ENCODE measurements at regions of chr20 and their contacts with region 1.

Region 1: DNA sequence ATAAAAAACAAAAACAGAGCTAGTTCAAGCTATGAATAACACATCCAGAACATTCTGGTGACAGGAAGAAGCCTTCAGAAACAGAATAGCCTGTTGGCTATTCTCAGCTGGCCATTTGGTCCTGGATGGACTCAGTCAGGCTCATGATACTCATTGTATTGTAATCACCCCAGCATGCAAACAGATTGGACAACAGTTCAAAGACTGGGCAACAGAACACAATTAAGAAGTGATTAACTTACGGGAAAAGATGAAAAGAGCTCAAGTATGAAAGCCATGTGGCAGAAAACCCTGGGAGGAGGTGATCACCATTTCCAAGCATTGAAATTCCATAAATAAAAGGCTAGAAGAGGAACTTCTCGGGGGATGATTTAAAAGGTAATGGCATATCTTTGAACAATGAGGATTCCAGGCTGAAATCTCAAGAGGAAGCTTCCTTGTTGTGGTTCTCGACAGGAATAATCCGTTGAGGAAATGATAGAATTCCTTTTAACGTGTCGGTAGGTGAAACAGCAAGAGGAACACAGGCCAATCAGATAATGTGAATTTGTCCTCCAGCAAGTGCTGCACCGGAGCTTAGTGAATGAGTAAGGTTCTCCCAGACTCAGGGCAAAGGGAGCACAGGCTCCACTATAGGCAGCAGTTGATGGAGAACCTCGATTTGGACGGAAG is 172.4 kb downstream of the BCAS1 start:
- DNase-seq: peak in 1 of 2 donors; percentile 41
- ATAC-seq: peak; percentile 36 to 68 (median 60)
- H3K4me3 ChIP-seq: no peak overlapping the region
- H3K27ac ChIP-seq: peak overlapping the region in 8 of 10 donors; percentile 30 to 85 (median 76)
- H3K4me1 ChIP-seq: peaks cover 0 to 49% (median 37%) of the 10 kb centered on the region in 9 donors
- H3K27me3 ChIP-seq: no peaks in the 10 kb centered on the region
- CTCF ChIP-seq: no peak

Region 2: GRCh38 chr20:53828682-53829254 is 69.3 kb before region 1 on chr20:
- intact Hi-C with region 1: loop called in 1 of 10 experiments (anchors 1 kb)
- DNase-seq: peak in 1 of 2 donors; percentile 63
- ATAC-seq: peak; percentile 72 to 93 (median 85)
- H3K4me3 ChIP-seq: peak overlapping the region in 7 of 10 donors; percentile 5 to 43 (median 35)
- H3K27ac ChIP-seq: peak overlapping the region; percentile 28 to 93 (median 84)
- H3K4me1 ChIP-seq: peaks cover 0 to 48% (median 20%) of the 10 kb centered on the region in 9 donors
- H3K27me3 ChIP-seq: no peaks in the 10 kb centered on the region
- CTCF ChIP-seq: peak in 3 of 9 donors; percentile 12 to 40 (median 24)